GM12878 (cell line): ENCODE measurements at regions of chr18 and their contacts with region 1.

Region 1: GRCh38 chr18:3885209-3885792 is 435.3 kb downstream of the TGIF1 start:
- DNase-seq: no peak
- ATAC-seq: peak; percentile 93
- H3K4me3 ChIP-seq: no peak overlapping the region
- H3K27ac ChIP-seq: no peak overlapping the region
- H3K4me1 ChIP-seq: no peaks in the 10 kb centered on the region
- H3K27me3 ChIP-seq: no peaks in the 10 kb centered on the region
- CTCF ChIP-seq: peak in 2 of 3 experiments; percentile 6 to 38; a peak in 2 of 6 replicates
- EP300 ChIP-seq: no peak
- POLR2A ChIP-seq: no peak
- RAD21 ChIP-seq: no peak

Region 2: DNA sequence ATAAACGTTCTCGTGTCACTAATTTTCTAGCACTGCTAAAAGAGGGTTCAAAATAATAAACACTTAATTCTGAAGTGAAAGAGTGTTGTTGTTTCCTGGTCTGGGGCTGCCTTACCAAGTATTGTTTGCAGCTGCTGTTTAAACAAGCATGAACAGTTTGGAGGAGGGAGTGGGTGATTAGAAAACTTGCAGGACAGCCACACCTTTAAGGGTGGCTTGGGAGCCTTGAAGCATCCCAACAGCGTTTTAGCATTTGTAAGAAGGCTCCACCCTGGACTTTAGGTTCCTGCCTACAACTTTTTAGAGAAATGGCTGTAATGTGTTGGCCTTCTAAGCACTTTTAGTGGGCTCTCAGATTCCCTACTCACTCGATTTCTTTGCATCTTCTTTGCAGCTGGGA is 63.8 kb before region 1 on chr18:
- CTCF ChIA-PET with region 1: no interaction called
- POLR2A ChIA-PET with region 1: interaction called, 13 read pairs
- RAD21 ChIA-PET with region 1: no interaction called
- SMC1A ChIA-PET with region 1: no interaction called
- in situ Hi-C with region 1: no loop called
- intact Hi-C with region 1: no loop called
- DNase-seq: no peak
- ATAC-seq: no peak
- H3K4me3 ChIP-seq: no peak overlapping the region
- H3K27ac ChIP-seq: no peak overlapping the region
- H3K4me1 ChIP-seq: no peaks in the 10 kb centered on the region
- H3K27me3 ChIP-seq: no peaks in the 10 kb centered on the region
- CTCF ChIP-seq: no peak
- EP300 ChIP-seq: no peak
- POLR2A ChIP-seq: no peak
- RAD21 ChIP-seq: no peak

Region 3: DNA sequence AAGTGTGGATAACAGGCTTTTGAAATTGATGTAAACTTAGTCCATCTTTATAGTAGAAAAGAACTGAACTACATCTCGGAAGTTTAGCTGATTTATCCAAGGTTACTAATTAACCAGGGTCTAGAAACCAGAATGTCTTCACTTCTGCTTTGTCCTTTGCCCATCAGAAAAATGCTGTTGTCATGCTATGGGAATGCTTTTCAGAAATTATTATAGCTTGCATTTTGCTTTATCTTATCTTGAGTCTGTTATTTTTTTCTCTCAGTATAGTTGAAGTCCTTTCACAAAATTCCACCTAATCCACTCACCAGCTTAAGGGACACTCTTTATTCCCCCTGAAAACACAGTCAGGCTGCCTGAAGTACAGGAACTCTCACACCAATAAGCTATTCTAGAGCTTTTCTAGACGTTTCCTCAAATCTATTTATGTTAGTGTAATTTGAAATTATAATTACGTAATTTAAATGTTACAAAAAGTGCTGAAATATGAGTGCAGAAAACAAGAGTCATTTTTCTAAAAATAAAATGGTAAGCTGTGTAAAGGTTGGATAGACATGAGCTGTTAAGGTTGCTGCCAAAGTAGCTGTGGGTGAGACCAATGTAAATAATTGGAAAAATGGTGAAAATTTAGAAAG is 20.9 kb after region 1 on chr18:
- CTCF ChIA-PET with region 1: interaction called, 3 read pairs
- POLR2A ChIA-PET with region 1: interaction called, 3 read pairs
- RAD21 ChIA-PET with region 1: interaction called, 3 read pairs
- SMC1A ChIA-PET with region 1: interaction called, 17 read pairs
- in situ Hi-C with region 1: no loop called
- intact Hi-C with region 1: no loop called
- DNase-seq: peak; percentile 11
- ATAC-seq: peak; percentile 82
- H3K4me3 ChIP-seq: no peak overlapping the region
- H3K27ac ChIP-seq: no peak overlapping the region
- H3K4me1 ChIP-seq: no peaks in the 10 kb centered on the region
- H3K27me3 ChIP-seq: no peaks in the 10 kb centered on the region
- CTCF ChIP-seq: no peak
- EP300 ChIP-seq: no peak; a peak in 1 of 4 replicates
- POLR2A ChIP-seq: no peak
- RAD21 ChIP-seq: no peak

Region 4: DNA sequence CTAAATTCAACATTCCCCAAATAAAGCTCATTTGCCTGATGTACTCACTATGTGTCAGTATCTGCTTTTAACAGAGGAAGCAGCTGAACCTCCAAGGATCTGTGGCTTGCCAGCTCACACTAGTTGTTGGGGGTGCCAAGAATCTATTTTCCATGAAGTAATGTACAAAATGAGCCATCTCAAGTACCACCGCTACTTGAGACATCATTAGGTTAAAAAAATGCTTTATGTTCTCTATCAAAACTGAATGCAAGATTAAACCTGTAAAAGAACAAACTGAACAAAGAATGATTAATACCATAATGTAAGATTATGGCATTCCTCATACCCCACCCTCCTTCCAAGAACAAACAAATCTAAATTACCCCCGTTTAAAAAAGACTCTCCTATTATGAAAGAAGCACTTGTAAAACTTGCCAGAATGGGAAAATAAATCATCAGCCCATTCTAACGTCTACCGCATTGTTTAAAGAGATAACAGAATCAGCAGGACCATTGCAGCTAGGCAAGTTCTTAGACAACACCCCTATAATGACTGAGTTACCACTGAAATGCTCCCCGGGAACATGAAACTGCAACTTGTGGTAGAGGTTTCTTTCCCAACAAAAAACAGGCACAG is 98.2 kb after region 1 on chr18:
- CTCF ChIA-PET with region 1: no interaction called
- POLR2A ChIA-PET with region 1: no interaction called
- RAD21 ChIA-PET with region 1: no interaction called
- SMC1A ChIA-PET with region 1: no interaction called
- in situ Hi-C with region 1: no loop called
- intact Hi-C with region 1: no loop called
- DNase-seq: no peak
- ATAC-seq: peak; percentile 11; the same call in 1 of the 3 replicates
- H3K4me3 ChIP-seq: no peak overlapping the region
- H3K27ac ChIP-seq: no peak overlapping the region
- H3K4me1 ChIP-seq: no peaks in the 10 kb centered on the region
- H3K27me3 ChIP-seq: no peaks in the 10 kb centered on the region
- CTCF ChIP-seq: no peak
- EP300 ChIP-seq: no peak
- POLR2A ChIP-seq: no peak
- RAD21 ChIP-seq: no peak